Activated CD4-positive, alpha-beta memory T cell treated with anti-CD3 and anti-CD28 coated beads, Interleukin-2, amount 10 ng/mL, durations not matched to agents 7 days and 5 days (primary cell): ENCODE measurements at regions of chr6 and their contacts with region 1.

Region 1: GRCh38 chr6:32609731-32610640 is 20.3 kb upstream of the HLA-DRB1 start:
- DNase-seq: peak; percentile 60
- H3K4me3 Mint-ChIP-seq: no peak overlapping the region
- H3K27ac Mint-ChIP-seq: no peak overlapping the region
- H3K4me1 Mint-ChIP-seq: peaks cover 21% of the 10 kb centered on the region
- H3K27me3 Mint-ChIP-seq: no peaks in the 10 kb centered on the region

Region 2: GRCh38 chr6:32622545-32623401 is 12.8 kb after region 1 on chr6:
- CTCF ChIA-PET with region 1: interaction called, 7 read pairs
- POLR2A ChIA-PET with region 1: interaction called, 13 read pairs
- DNase-seq: peak; percentile 49
- H3K4me3 Mint-ChIP-seq: peak overlapping the region; percentile 15
- H3K27ac Mint-ChIP-seq: peak overlapping the region; percentile 96
- H3K4me1 Mint-ChIP-seq: peaks cover 48% of the 10 kb centered on the region
- H3K27me3 Mint-ChIP-seq: no peaks in the 10 kb centered on the region